ENCODE measurements at regions of chr18 and their contacts with region 1.

Region 1: GRCh38 chr18:45967007-45967706 is at the start of gene EPG5:
- DNase-seq: peak; percentile 91 to 95 (median 92)
- H3K4me3 ChIP-seq: peak within 1 kb of the TSS; percentile 94
- H3K27ac ChIP-seq: no peak within 1 kb of the TSS
- H3K4me1 ChIP-seq: peaks cover 3% of the 10 kb centered on the region
- H3K27me3 ChIP-seq: no peaks in the 10 kb centered on the region
- CTCF ChIP-seq: no peak
- EP300 ChIP-seq: peak; percentile 23
- POLR2A ChIP-seq: peak; percentile 29
- total RNA-seq, gene EPG5: 16.4 to 28.4 (median 25.8) TPM

Region 2: GRCh38 chr18:45951016-45951714 is 16.0 kb before region 1 on chr18:
- intact Hi-C with region 1: no loop called
- DNase-seq: no peak
- H3K4me3 ChIP-seq: no peak overlapping the region
- H3K27ac ChIP-seq: no peak overlapping the region
- H3K4me1 ChIP-seq: no peaks in the 10 kb centered on the region
- H3K27me3 ChIP-seq: no peaks in the 10 kb centered on the region
- CTCF ChIP-seq: no peak
- EP300 ChIP-seq: no peak
- POLR2A ChIP-seq: no peak

Region 3: GRCh38 chr18:46073474-46074331 is 106.5 kb after region 1 on chr18:
- intact Hi-C with region 1: loop called in 1 of 4 experiments (anchors 10 kb)
- DNase-seq: peak in 1 of 5 donors; percentile 56
- H3K4me3 ChIP-seq: no peak overlapping the region
- H3K27ac ChIP-seq: no peak overlapping the region
- H3K4me1 ChIP-seq: peaks cover 9% of the 10 kb centered on the region
- H3K27me3 ChIP-seq: no peaks in the 10 kb centered on the region
- CTCF ChIP-seq: peak in 2 of 3 donors; percentile 57 to 63
- EP300 ChIP-seq: no peak
- POLR2A ChIP-seq: no peak

Region 4: GRCh38 chr18:46097801-46098615 is 130.9 kb after region 1 on chr18 and contains the start of gene ATP5F1A:
- intact Hi-C with region 1: loop called in 1 of 4 experiments (anchors 10 kb)
- DNase-seq: peak; percentile 80 to 91 (median 86)
- H3K4me3 ChIP-seq: peak within 1 kb of the TSS; percentile 94
- H3K27ac ChIP-seq: peak within 1 kb of the TSS; percentile 26 to 71
- H3K4me1 ChIP-seq: peaks cover 11% of the 10 kb centered on the region
- H3K27me3 ChIP-seq: no peaks in the 10 kb centered on the region
- CTCF ChIP-seq: no peak
- EP300 ChIP-seq: no peak
- POLR2A ChIP-seq: peak; percentile 45
- total RNA-seq, gene ATP5F1A: 267 to 370 (median 294) TPM